Heart left ventricle (tissue), 16 donors: ENCODE measurements at regions of chr1 and their contacts with region 1.

Region 1: DNA sequence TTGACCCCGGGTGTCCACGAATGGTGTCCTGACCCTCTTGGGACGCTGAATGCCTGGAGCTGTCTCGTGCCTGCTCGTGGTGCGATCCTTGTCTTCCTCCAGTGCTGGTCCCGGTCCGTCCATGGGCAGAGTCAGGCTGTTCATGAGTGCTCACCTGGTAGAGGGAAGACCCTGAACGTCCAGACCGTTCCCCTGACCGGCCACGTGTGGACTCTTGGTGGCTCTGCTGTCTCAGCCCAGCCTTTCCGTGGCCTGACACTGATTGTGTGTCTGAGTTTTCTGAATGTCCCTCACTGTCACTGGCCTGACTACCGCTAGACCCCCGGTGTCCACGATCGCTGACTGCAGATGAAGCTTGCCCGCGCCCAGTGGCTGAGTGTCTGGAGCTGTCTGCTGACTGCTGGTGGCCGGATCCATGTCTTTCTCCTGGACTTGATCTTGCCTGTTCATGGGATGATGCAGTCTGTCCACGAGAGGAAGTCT is 11.7 kb downstream of the FLG start:
- DNase-seq: peak in 1 of 5 donors; percentile 10
- ATAC-seq: no peak
- H3K4me3 ChIP-seq: no peak overlapping the region
- H3K27ac ChIP-seq: no peak overlapping the region
- H3K4me1 ChIP-seq: no peaks in the 10 kb centered on the region
- H3K27me3 ChIP-seq: no peaks in the 10 kb centered on the region
- CTCF ChIP-seq: no peak
- POLR2A ChIP-seq: no peak

Region 2: DNA sequence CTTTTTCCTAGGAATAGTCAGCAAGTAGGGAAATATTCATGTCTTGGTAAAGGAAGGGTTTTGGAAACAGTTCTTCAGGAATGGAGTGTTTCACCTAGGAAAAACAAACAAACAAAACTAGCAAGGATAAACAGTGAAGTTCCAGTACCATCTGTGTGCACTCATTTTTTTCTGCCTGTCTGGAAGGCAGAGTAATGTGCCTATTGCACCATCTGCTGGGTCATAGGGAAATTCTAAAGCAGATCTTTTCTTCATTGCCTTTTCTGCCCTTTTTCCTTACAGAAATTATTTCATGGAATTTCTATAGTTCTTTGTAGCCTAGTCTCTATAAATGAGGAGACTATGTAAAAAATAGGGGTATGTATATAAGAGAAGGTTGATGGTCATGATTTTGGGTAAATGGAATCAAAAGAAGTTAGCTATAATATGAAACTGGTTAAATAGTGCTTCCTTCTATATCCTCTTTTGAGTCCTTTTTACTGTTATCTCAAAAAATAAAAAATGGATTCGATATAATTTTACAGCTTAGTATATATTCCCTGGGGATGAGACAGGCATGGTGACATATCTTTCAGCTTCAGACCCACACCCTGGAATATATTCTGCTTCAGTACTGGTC is 85.9 kb before region 1 on chr1:
- intact Hi-C with region 1: loop called in 1 of 10 experiments (anchors 10 kb)
- DNase-seq: no peak
- ATAC-seq: no peak
- H3K4me3 ChIP-seq: no peak overlapping the region
- H3K27ac ChIP-seq: no peak overlapping the region
- H3K4me1 ChIP-seq: no peaks in the 10 kb centered on the region
- H3K27me3 ChIP-seq: no peaks in the 10 kb centered on the region
- CTCF ChIP-seq: peak in 3 of 12 donors; percentile 16 to 31 (median 21)
- POLR2A ChIP-seq: no peak

Region 3: GRCh38 chr1:152515434-152515783 is 202.0 kb after region 1 on chr1:
- intact Hi-C with region 1: loop called in 1 of 10 experiments (anchors 5 kb)
- DNase-seq: no peak
- ATAC-seq: no peak
- H3K4me3 ChIP-seq: peak overlapping the region in 10 of 12 donors; percentile 16 to 46 (median 24)
- H3K27ac ChIP-seq: no peak overlapping the region
- H3K4me1 ChIP-seq: peaks cover 0 to 10% (median 4%) of the 10 kb centered on the region in 12 donors
- H3K27me3 ChIP-seq: peaks cover 9 to 72% (median 35%) of the 10 kb centered on the region in 9 donors
- CTCF ChIP-seq: no peak
- POLR2A ChIP-seq: no peak